Tibial artery (tissue), 4 donors: ENCODE measurements at regions of chr14 and their contacts with region 1.

Region 1: GRCh38 chr14:70907176-70907995 is at the start of gene PCNX1:
- DNase-seq: peak; percentile 84 to 92
- H3K4me3 ChIP-seq: peak within 1 kb of the TSS; percentile 81 to 85
- H3K27ac ChIP-seq: peak within 1 kb of the TSS; percentile 96 to 97
- H3K4me1 ChIP-seq: peaks cover 0 to 44% (median 15%) of the 10 kb centered on the region in 4 donors
- H3K27me3 ChIP-seq: no peaks in the 10 kb centered on the region
- CTCF ChIP-seq: peak; percentile 88 to 90

Region 2: GRCh38 chr14:70816525-70816924 is 90.9 kb before region 1 on chr14:
- intact Hi-C with region 1: loop called (anchors 5 kb)
- DNase-seq: no peak
- H3K4me3 ChIP-seq: no peak overlapping the region
- H3K27ac ChIP-seq: no peak overlapping the region
- H3K4me1 ChIP-seq: peaks cover 0 to 11% (median 8%) of the 10 kb centered on the region in 4 donors
- H3K27me3 ChIP-seq: peaks cover 0 to 17% of the 10 kb centered on the region in 2 donors
- CTCF ChIP-seq: no peak

Region 3: DNA sequence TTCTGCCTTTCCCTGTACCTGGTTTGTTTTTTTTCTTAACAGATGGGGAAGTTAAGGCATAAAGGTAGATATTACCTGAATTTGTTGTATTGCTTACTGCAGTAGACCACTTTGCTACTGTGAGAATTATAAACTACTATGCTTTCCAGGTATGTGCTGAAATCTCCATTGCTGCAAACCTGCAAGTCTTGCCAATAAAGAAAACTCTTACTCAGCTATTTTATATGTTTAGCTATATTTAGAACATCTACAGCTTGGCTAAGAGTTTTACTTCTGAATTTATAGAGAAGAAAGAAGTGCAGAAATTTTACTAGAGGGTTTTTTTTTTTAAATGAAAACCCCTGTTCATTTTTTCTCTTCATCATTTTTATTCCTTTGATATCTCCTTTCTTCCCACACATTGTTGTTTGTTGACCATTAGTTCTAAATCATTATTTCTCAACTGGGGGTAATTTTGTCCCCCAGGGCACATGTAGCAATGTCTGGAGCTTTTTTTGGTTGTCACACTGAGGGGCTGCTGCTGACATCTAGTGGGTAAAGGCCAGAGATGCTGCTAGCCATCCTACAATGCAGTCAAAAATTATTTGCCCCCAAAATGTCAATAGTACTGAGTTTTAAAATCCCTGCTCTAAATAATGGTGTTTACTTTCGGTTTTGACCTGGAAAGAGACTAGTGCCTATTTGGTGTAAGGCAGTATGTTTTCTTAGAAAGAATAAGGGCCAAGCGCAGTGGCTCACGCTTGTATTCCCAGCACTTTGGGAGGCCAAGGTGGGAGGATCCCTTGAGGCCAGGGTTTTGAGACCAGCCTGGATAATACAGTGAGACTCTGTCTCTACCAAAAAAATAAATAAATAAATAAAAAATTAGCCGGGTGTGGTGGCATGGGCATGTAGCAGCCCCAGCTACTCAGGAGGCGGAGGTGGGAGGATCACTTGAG is 48.4 kb after region 1 on chr14:
- intact Hi-C with region 1: loop called (anchors 5 kb)
- DNase-seq: no peak
- H3K4me3 ChIP-seq: no peak overlapping the region
- H3K27ac ChIP-seq: no peak overlapping the region
- H3K4me1 ChIP-seq: peaks cover 0 to 16% (median 8%) of the 10 kb centered on the region in 4 donors
- H3K27me3 ChIP-seq: no peaks in the 10 kb centered on the region
- CTCF ChIP-seq: peak; percentile 32 to 41

Region 4: DNA sequence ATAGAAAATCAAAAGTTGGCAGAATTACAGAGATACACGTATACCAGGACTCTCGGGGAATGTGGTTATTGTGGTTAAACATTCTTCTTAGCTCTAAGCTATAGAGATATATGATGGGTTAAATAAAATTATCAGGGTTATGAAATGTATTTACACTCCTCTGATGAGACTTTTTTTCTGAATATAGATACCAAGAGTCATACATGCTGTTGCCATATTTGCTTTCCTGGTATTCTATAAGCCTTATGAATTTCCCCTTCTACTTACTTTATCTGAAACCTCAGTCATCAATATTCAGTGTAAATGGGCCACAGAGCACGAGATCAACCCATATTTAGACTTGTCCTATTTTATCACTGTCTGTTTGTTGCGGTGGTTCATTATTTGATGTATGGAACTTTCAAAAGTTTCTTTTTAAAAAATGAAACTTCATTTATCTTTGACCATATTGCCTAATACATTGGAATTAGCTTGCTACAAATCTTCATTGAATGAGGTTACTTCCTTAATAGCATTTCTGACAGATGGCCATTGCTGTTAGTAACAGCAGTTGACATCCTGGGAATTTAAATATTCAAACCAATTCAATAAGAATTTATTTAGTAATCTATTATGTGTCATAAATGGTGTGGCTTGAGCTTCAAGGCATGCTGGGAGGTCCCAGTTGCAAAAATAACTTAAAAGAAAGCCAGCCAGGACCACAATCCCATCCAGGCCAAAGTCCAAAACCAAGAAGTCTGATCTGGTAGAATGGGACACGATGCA is 393.4 kb after region 1 on chr14:
- intact Hi-C with region 1: no loop called
- DNase-seq: no peak
- H3K4me3 ChIP-seq: no peak overlapping the region
- H3K27ac ChIP-seq: no peak overlapping the region
- H3K4me1 ChIP-seq: no peaks in the 10 kb centered on the region
- H3K27me3 ChIP-seq: no peaks in the 10 kb centered on the region
- CTCF ChIP-seq: no peak